HepG2 (cell line): ENCODE measurements at regions of chr7 and their contacts with region 1.

Region 1: DNA sequence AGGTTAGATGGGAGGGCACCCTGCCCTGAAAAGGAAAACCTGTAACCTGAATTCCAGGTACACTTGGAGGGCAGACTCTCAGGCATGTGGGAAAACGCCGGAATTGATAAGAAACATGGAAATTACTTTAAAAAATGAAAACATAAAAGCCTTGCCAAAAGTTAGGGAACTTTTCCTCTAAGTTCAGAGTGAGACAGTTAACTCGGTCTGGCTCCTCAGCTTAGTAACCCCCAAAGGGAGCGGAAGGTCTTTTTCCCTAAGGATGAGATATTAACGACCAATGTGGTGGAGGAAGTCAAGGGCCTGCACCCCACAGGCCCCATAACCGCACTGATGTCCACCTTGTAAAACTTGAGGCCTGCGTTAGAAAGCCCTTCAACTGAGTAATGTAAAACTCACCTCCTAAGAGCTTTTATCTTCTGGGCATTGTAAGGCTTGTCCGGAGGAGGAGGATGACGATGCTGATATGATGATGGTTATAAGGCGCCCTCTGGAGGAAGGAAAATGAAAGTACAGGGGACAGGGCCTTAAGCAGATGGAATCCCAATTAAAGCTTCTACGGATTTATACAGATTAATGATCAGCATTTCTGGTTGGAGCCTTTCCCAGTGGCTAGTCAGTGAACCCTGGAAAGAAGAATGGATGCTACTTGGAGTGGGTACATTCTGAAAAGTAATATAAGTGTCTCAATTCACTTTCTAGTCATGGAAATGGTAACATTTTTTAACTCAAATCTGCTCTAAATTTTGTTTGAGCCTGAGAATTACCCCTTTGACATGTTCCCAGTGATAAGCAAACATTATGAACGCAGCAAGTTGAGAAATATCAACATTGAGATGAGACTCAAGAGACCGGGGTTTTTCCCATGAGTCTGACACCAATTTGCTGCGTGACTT is 694 bp downstream of the COL1A2 start:
- DNase-seq: peak; percentile 63
- ATAC-seq: peak; percentile 89
- H3K4me3 ChIP-seq: no peak overlapping the region
- H3K27ac ChIP-seq: no peak overlapping the region
- H3K4me1 ChIP-seq: no peaks in the 10 kb centered on the region
- H3K27me3 ChIP-seq: no peaks in the 10 kb centered on the region; a peak in 1 of 5 replicates
- CTCF ChIP-seq: peak; percentile 76
- EP300 ChIP-seq: no peak
- POLR2A ChIP-seq: no peak
- RAD21 ChIP-seq: peak; percentile 55; the same call in 1 of the 2 replicates

Region 2: GRCh38 chr7:93715234-93715633 is 680.2 kb before region 1 on chr7:
- CTCF ChIA-PET with region 1: no interaction called
- POLR2A ChIA-PET with region 1: no interaction called
- in situ Hi-C with region 1: no loop called
- intact Hi-C with region 1: loop called (anchors 5 kb)
- DNase-seq: peak; percentile 34
- ATAC-seq: peak; percentile 90
- H3K4me3 ChIP-seq: no peak overlapping the region
- H3K27ac ChIP-seq: no peak overlapping the region
- H3K4me1 ChIP-seq: no peaks in the 10 kb centered on the region
- H3K27me3 ChIP-seq: no peaks in the 10 kb centered on the region
- CTCF ChIP-seq: peak; percentile 67
- EP300 ChIP-seq: no peak
- POLR2A ChIP-seq: no peak
- RAD21 ChIP-seq: no peak; the same call in 1 of the 2 replicates

Region 3: DNA sequence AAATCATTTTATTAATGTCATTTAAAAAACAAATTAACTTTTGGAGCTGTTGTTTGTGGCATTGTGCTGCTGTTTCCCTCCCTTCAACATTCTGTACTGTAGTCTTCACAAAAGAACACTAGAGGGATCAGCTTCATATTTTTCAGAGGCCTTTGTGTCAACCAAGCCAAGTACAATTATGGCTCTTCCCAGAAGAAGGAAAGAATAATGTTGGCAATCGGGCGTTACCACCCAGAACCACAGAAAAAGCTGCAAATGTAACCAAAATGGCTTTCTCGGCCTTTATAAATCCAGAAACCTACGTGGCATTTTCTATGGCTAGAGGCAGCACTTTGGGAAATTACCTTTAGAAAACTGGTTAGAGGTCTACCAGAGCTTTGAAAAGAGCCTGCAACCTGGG is 99.5 kb before region 1 on chr7:
- CTCF ChIA-PET with region 1: no interaction called
- POLR2A ChIA-PET with region 1: no interaction called
- in situ Hi-C with region 1: loop called (anchors 5 kb)
- intact Hi-C with region 1: no loop called
- DNase-seq: peak; percentile 7
- ATAC-seq: peak; percentile 72
- H3K4me3 ChIP-seq: no peak overlapping the region
- H3K27ac ChIP-seq: no peak overlapping the region
- H3K4me1 ChIP-seq: peaks cover 7% of the 10 kb centered on the region
- H3K27me3 ChIP-seq: no peaks in the 10 kb centered on the region
- CTCF ChIP-seq: peak; percentile 32; the same call in 1 of the 2 replicates
- EP300 ChIP-seq: no peak
- POLR2A ChIP-seq: no peak
- RAD21 ChIP-seq: no peak